ENCODE measurements at regions of chr1 and their contacts with region 1.

Region 1: GRCh38 chr1:203612932-203613682 is 13.5 kb upstream of the ATP2B4 start:
- DNase-seq: no peak
- ATAC-seq: no peak
- H3K4me3 ChIP-seq: no peak overlapping the region
- H3K27ac ChIP-seq: no peak overlapping the region
- H3K4me1 ChIP-seq: peaks cover 0 to 24% (median 0%) of the 10 kb centered on the region in 12 donors
- H3K27me3 ChIP-seq: no peaks in the 10 kb centered on the region
- CTCF ChIP-seq: no peak
- POLR2A ChIP-seq: no peak

Region 2: GRCh38 chr1:203381151-203381751 is 231.9 kb before region 1 on chr1:
- intact Hi-C with region 1: no loop called
- DNase-seq: no peak
- ATAC-seq: peak in 3 of 4 donors; percentile 18 to 42 (median 34)
- H3K4me3 ChIP-seq: no peak overlapping the region
- H3K27ac ChIP-seq: peak overlapping the region in 4 of 12 donors; percentile 4 to 69 (median 30)
- H3K4me1 ChIP-seq: peaks cover 0 to 43% (median 35%) of the 10 kb centered on the region in 12 donors
- H3K27me3 ChIP-seq: no peaks in the 10 kb centered on the region
- CTCF ChIP-seq: no peak
- POLR2A ChIP-seq: no peak

Region 3: GRCh38 chr1:203569490-203570318 is 43.4 kb before region 1 on chr1:
- intact Hi-C with region 1: loop called in 1 of 10 experiments (anchors 10 kb)
- DNase-seq: no peak
- ATAC-seq: no peak
- H3K4me3 ChIP-seq: no peak overlapping the region
- H3K27ac ChIP-seq: no peak overlapping the region
- H3K4me1 ChIP-seq: no peaks in the 10 kb centered on the region
- H3K27me3 ChIP-seq: no peaks in the 10 kb centered on the region
- CTCF ChIP-seq: no peak
- POLR2A ChIP-seq: no peak

Measured in heart left ventricle (tissue), 16 donors.